Right cardiac atrium (tissue), 5 donors: ENCODE measurements at regions of chr9 and their contacts with region 1.

Region 1: GRCh38 chr9:98074115-98074990 is 17.8 kb downstream of the NANS start:
- DNase-seq: peak in 2 of 3 donors; percentile 74 to 75
- ATAC-seq: peak; percentile 20 to 58
- H3K4me3 ChIP-seq: no peak overlapping the region
- H3K27ac ChIP-seq: no peak overlapping the region
- H3K4me1 ChIP-seq: peaks cover 2% of the 10 kb centered on the region
- H3K27me3 ChIP-seq: no peaks in the 10 kb centered on the region

Region 2: DNA sequence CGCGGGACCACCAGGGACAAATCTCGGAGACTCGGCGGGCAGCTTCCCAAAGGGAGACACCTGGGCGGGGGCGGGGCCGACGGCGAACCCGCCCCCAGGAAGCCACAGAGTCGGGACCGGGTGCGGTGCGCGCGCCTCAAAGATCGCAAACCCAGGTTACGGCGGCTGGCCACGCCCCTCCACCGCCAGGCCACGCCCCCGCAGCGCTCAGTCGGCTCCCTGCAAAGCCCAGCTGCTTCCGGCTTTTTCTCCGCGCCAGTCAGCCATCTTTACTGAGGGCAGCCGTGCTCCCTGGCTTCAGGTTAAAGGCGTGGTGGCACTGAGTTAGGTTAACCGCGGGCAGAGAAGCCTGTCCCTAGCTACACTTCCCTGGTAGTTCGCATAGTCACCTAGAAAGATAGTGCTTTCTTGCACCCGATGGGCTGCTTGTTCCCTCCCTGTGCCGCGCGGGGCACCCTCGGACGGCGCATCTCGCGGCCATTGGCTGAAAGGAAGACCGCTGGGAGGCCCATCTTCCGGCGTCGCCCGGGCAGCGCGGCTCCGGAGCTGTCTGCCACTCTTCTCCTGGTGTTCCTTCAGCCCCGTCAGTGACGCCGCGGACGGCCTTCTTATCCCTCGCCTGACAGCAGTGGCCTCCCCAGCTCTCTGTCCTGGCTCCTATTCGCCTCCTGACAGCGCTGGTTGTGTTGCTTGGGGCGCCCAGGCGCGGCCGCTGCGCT is 181.4 kb after region 1 on chr9 and contains the start of gene TBC1D2:
- intact Hi-C with region 1: loop called in 3 of 4 experiments (anchors 5 to 10 kb)
- DNase-seq: peak; percentile 94 to 98 (median 98)
- ATAC-seq: peak; percentile 97 to 98
- H3K4me3 ChIP-seq: peak within 1 kb of the TSS; percentile 77
- H3K27ac ChIP-seq: peak within 1 kb of the TSS; percentile 95
- H3K4me1 ChIP-seq: no peaks in the 10 kb centered on the region
- H3K27me3 ChIP-seq: no peaks in the 10 kb centered on the region
- total RNA-seq, gene TBC1D2: 2.5 to 3.5 (median 3.2) TPM